Endothelial cell of umbilical vein (primary cell): ENCODE measurements at regions of chr5 and their contacts with region 1.

Region 1: DNA sequence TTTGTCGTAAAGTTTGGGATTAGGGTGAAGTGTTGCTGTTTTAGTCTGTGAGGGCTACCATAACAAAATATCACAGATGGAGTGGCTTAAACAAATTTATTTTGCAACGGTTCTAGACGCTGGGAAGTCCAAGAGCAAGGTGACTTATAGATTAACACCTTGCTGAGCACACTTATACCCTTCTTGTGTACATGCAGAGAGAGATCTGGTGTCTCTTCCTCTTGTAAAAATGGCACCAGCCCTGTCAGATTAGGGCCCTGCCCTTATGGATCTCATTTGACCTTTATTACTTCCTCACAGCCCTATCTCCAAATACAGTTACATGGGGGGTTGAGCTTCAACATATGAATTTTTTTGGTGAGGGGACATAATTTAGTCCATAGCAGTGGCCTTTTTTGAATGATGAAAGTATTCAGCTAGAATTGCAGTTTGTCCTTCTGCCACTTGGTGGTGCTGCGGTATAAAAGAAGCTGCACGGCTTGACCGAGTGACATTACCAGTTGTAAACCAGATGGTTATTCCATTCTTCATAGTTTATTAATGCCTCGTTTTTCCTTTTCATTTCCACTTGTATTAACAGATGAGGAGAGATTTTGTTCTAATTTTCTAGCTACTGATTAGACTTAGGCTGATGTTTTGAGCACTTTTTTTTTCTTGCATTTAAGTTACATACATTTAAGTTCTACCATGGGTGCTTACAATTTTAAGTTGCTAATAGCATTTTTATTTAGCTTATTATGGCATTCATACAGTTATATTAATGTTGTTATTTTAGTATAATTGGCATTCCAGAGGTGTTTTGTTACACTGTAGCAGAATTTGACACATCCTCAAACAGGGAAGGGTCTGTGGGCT is 19.4 kb downstream of the DCP2 start:
- DNase-seq: peak; percentile 78
- H3K4me3 ChIP-seq: no peak overlapping the region
- H3K27ac ChIP-seq: no peak overlapping the region
- H3K4me1 ChIP-seq: no peaks in the 10 kb centered on the region
- H3K27me3 ChIP-seq: no peaks in the 10 kb centered on the region
- CTCF ChIP-seq: peak; percentile 72 to 76
- POLR2A ChIP-seq: no peak

Region 2: GRCh38 chr5:111135946-111136345 is 1860.0 kb before region 1 on chr5:
- CTCF ChIA-PET with region 1: no interaction called
- POLR2A ChIA-PET with region 1: no interaction called
- dilution Hi-C with region 1: no loop called
- intact Hi-C with region 1: no loop called
- DNase-seq: no peak
- H3K4me3 ChIP-seq: no peak overlapping the region
- H3K27ac ChIP-seq: no peak overlapping the region
- H3K4me1 ChIP-seq: peaks cover 16% of the 10 kb centered on the region
- H3K27me3 ChIP-seq: no peaks in the 10 kb centered on the region
- CTCF ChIP-seq: no peak
- POLR2A ChIP-seq: no peak

Region 3: DNA sequence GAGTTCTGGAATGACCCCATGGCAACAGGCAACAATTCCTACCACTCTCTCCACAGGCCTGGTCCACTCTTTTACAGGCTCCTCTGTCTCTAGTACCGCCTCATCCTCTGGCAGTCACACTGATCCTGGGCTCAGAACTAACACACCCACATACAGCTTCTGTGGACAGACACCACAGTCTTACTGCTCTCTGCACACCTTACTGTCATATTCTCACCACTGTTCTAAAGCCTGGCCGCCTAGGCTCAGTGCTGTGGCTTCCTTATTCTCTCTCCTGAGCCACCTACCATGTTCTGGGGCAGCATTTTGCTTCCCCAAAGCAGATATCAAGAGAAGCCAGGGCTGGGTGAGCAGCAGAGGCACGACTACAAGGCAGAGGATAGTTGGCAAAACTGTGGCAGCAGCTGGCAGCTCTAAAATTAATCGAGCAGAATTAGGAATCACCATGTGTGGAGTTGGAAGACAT is 88.8 kb before region 1 on chr5:
- CTCF ChIA-PET with region 1: no interaction called
- POLR2A ChIA-PET with region 1: no interaction called
- dilution Hi-C with region 1: no loop called
- intact Hi-C with region 1: no loop called
- DNase-seq: no peak
- H3K4me3 ChIP-seq: no peak overlapping the region
- H3K27ac ChIP-seq: no peak overlapping the region
- H3K4me1 ChIP-seq: no peaks in the 10 kb centered on the region
- H3K27me3 ChIP-seq: no peaks in the 10 kb centered on the region
- CTCF ChIP-seq: no peak
- POLR2A ChIP-seq: no peak

Region 4: DNA sequence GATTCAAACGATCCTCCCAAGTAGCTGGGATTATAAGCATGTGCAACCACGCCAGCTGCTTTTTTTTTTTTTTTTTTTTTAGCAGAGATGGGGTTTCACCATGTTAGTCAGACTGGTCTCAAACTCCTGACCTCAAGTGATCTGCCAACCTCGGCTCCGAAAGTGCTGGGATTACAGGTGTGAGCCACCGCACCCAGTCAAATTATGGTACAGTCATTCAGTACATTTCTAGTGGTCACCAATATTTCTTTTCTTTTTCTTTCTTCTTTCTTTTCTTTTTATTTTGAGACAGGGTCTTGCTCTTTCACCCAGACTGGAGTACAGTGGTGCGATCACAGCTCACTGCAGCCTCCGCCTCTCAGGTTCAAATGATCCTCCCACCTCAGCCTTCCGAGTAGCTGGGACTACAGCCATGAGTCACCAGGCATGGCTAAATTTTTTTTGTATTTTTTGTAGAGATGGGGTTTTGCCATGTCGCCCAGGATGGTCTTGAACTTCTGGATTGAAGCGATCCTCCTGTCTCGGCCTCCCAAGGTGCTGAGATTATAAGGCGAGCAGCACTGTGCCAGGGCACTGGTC is 44.8 kb before region 1 on chr5:
- CTCF ChIA-PET with region 1: no interaction called
- POLR2A ChIA-PET with region 1: no interaction called
- dilution Hi-C with region 1: no loop called
- intact Hi-C with region 1: no loop called
- DNase-seq: no peak
- H3K4me3 ChIP-seq: no peak overlapping the region
- H3K27ac ChIP-seq: no peak overlapping the region
- H3K4me1 ChIP-seq: no peaks in the 10 kb centered on the region
- H3K27me3 ChIP-seq: no peaks in the 10 kb centered on the region
- CTCF ChIP-seq: no peak
- POLR2A ChIP-seq: no peak

Region 5: DNA sequence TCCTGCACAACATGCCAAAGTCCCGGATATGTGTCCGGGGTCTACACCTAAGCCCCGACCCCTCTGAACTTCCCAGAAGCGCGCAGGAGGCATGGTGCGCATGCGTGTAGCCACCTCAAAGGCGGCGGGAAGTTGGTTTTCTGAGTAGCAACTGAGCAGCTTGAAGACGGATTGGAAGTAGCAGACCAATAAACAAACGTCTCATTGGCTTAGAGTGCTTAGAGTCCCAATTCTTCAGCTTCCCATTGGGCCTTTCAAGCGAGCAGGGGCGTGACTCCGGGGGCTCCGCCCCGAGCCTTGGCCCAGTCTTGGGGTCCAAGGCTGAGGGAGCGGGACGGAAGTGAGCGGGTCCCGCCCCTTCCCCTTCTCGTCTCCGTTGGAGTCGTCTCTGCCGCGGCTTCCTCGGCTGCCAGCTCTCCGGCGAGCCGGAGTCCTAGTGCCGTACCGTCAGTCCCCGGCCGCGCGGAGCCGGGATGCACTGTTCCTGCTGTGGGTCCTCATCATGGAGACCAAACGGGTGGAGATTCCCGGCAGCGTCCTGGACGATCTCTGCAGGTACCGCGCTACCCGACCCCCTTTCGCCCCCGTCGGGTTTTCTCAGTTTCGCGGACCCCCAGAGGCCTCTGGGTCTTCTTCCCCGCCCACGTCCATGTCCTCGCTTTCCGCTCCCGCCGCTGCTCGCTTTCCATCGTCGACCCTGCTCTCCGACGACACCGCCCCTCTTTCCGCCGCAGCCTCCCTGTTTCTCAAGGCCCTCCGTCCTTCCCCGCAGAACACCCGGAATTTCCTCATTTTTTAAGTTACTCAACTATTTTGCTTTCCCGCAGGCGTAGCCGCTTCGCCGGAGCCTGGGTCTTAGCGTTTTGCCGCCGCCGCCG is 19.3 kb before region 1 on chr5 and contains the start of gene DCP2:
- CTCF ChIA-PET with region 1: interaction called, 12 read pairs
- POLR2A ChIA-PET with region 1: no interaction called
- dilution Hi-C with region 1: no loop called
- intact Hi-C with region 1: no loop called
- DNase-seq: peak; percentile 99
- H3K4me3 ChIP-seq: peak within 1 kb of the TSS; percentile 98 to 99 (median 99)
- H3K27ac ChIP-seq: peak within 1 kb of the TSS; percentile 48
- H3K4me1 ChIP-seq: peaks cover 21% of the 10 kb centered on the region
- H3K27me3 ChIP-seq: no peaks in the 10 kb centered on the region
- CTCF ChIP-seq: no peak
- POLR2A ChIP-seq: peak; percentile 97
- total RNA-seq, gene DCP2: 49.1 and 60.0 TPM in 2 replicates

Region 6: DNA sequence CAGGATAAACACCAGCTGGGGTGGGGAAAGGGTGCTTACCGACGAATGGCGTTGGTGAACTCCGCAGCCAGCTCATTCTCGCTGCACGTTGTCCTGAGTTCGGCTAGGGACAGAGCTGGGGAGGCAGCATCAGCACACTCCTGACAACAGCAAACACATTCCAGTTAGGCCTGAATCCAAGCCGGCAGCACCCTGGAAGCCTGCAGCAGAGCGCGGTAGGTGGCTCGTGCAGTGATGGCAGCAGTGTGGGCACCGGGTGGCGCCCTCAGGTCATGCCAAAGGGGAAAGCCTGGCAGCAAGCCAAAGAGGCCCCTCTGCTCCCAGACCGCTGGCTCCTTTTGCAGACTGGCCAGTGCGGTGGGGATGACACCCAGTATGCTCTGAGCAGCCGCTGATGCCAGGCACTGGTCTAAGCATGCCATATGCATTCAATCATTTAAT is 47.5 kb after region 1 on chr5:
- CTCF ChIA-PET with region 1: interaction called, 46 read pairs
- POLR2A ChIA-PET with region 1: no interaction called
- dilution Hi-C with region 1: no loop called
- intact Hi-C with region 1: loop called (anchors 2 kb)
- DNase-seq: peak; percentile 17
- H3K4me3 ChIP-seq: no peak overlapping the region
- H3K27ac ChIP-seq: no peak overlapping the region
- H3K4me1 ChIP-seq: peaks cover 4% of the 10 kb centered on the region
- H3K27me3 ChIP-seq: no peaks in the 10 kb centered on the region
- CTCF ChIP-seq: peak; percentile 19 to 20
- POLR2A ChIP-seq: no peak

Region 7: GRCh38 chr5:113090336-113091106 is 94.5 kb after region 1 on chr5:
- CTCF ChIA-PET with region 1: interaction called, 10 read pairs
- POLR2A ChIA-PET with region 1: no interaction called
- dilution Hi-C with region 1: no loop called
- intact Hi-C with region 1: no loop called
- DNase-seq: peak; percentile 70
- H3K4me3 ChIP-seq: no peak overlapping the region
- H3K27ac ChIP-seq: no peak overlapping the region
- H3K4me1 ChIP-seq: peaks cover 7% of the 10 kb centered on the region
- H3K27me3 ChIP-seq: no peaks in the 10 kb centered on the region
- CTCF ChIP-seq: peak in 1 of 2 donors; percentile 17
- POLR2A ChIP-seq: no peak

Region 8: DNA sequence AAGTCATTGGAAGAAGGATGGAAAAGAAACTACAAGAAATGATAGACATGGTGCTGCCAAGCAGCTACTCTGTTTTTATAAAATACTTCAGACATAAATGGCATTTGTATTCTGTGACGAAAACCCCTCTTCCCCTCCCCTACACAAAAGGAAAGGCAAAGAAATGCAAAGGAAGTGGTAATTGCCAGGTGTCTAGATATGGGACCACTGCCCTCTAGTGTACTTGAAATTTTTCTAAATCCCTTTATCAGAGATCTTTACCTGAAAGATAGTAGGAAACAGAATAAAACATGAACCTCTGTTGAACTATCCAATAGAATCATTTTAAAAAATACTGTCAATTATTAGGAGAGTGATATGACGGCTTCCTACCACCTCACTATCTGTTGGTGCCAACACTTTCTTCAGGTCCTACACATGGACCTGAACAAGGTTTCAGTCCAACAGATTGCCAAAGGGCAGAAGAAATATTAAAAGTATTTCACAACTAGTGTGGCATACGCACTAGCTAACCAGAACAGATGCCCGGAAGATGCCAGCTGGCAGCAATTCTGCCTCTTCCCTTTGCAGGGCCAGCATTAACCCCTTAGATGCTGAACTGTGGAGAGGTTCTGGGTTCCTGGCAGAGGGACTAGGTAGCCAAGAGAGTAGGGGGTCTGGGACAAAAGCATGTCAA is 334.7 kb after region 1 on chr5:
- CTCF ChIA-PET with region 1: interaction called, 97 read pairs
- POLR2A ChIA-PET with region 1: interaction called, 3 read pairs
- dilution Hi-C with region 1: no loop called
- intact Hi-C with region 1: loop called (anchors 1 kb)
- DNase-seq: peak; percentile 75
- H3K4me3 ChIP-seq: no peak overlapping the region
- H3K27ac ChIP-seq: no peak overlapping the region
- H3K4me1 ChIP-seq: peaks cover 9% of the 10 kb centered on the region
- H3K27me3 ChIP-seq: no peaks in the 10 kb centered on the region
- CTCF ChIP-seq: peak; percentile 20 to 30
- POLR2A ChIP-seq: no peak

Region 9: GRCh38 chr5:113421693-113422092 is 425.7 kb after region 1 on chr5:
- CTCF ChIA-PET with region 1: no interaction called
- POLR2A ChIA-PET with region 1: no interaction called
- dilution Hi-C with region 1: no loop called
- intact Hi-C with region 1: no loop called
- DNase-seq: no peak
- H3K4me3 ChIP-seq: no peak overlapping the region
- H3K27ac ChIP-seq: no peak overlapping the region
- H3K4me1 ChIP-seq: no peaks in the 10 kb centered on the region
- H3K27me3 ChIP-seq: no peaks in the 10 kb centered on the region
- CTCF ChIP-seq: no peak
- POLR2A ChIP-seq: no peak

Region 10: GRCh38 chr5:113606298-113607134 is 610.5 kb after region 1 on chr5:
- CTCF ChIA-PET with region 1: interaction called, 34 read pairs
- POLR2A ChIA-PET with region 1: no interaction called
- dilution Hi-C with region 1: no loop called
- intact Hi-C with region 1: loop called (anchors 1 kb)
- DNase-seq: peak; percentile 82
- H3K4me3 ChIP-seq: peak overlapping the region in 2 of 3 experiments; percentile 23 to 60
- H3K27ac ChIP-seq: no peak overlapping the region
- H3K4me1 ChIP-seq: peaks cover 8% of the 10 kb centered on the region
- H3K27me3 ChIP-seq: no peaks in the 10 kb centered on the region
- CTCF ChIP-seq: peak; percentile 62 to 65
- POLR2A ChIP-seq: no peak